ENCODE measurements at regions of chrX and their contacts with region 1.

Region 1: DNA sequence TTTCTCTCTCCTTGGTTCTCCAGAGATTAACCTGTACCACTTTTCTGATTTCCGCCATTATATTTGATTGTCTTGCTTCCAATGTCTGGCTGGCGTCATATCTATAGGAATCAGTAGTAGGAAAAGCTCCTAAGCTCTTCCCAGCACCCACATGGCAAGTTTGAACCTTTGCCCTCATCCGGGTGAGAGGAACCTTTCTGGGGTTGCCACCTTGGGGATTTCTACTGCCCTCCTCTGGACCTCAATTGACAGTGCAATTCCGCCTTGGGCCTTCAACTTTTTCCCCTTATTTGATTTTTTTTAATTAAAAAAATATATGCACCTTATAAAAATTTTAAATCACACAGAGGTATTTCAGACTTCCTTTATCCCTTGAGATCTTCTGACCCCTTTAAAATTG is 2.0 kb upstream of the CXorf66 start:
- DNase-seq: no peak
- H3K4me3 Mint-ChIP-seq: no peak overlapping the region
- H3K27ac Mint-ChIP-seq: no peak overlapping the region
- H3K4me1 Mint-ChIP-seq: no peaks in the 10 kb centered on the region
- H3K27me3 Mint-ChIP-seq: peaks cover 22% of the 10 kb centered on the region
- CTCF ChIP-seq: peak; percentile 14

Region 2: DNA sequence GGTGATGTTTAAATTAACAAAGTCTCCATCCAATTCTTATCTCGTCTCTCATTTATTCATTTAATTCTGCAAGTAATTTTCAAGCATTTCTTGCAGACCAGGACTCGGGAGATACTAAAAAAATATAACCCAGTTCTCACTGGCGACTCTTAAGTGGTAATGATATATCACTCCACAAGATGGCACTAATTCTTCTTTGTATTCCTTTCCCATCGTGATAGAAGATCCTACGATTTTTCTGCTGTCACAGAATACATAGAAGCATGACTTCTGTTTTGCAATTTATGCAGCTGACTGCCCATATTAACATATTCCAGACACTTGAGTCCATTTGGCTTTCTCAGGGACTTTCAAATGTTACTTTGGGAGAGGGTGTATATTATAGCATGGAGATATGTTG is 1191.8 kb before region 1 on chrX:
- CTCF ChIA-PET with region 1: no interaction called
- intact Hi-C with region 1: loop called (anchors 1 kb)
- DNase-seq: no peak
- H3K4me3 Mint-ChIP-seq: no peak overlapping the region
- H3K27ac Mint-ChIP-seq: no peak overlapping the region
- H3K4me1 Mint-ChIP-seq: no peaks in the 10 kb centered on the region
- H3K27me3 Mint-ChIP-seq: no peaks in the 10 kb centered on the region
- CTCF ChIP-seq: no peak

Region 3: GRCh38 chrX:139559383-139560042 is 407.8 kb before region 1 on chrX:
- CTCF ChIA-PET with region 1: no interaction called
- intact Hi-C with region 1: loop called (anchors 5 kb)
- DNase-seq: peak; percentile 11
- H3K4me3 Mint-ChIP-seq: no peak overlapping the region
- H3K27ac Mint-ChIP-seq: no peak overlapping the region
- H3K4me1 Mint-ChIP-seq: no peaks in the 10 kb centered on the region
- H3K27me3 Mint-ChIP-seq: no peaks in the 10 kb centered on the region
- CTCF ChIP-seq: no peak

Region 4: GRCh38 chrX:139680378-139680777 is 286.9 kb before region 1 on chrX:
- CTCF ChIA-PET with region 1: no interaction called
- intact Hi-C with region 1: no loop called
- DNase-seq: no peak
- H3K4me3 Mint-ChIP-seq: no peak overlapping the region
- H3K27ac Mint-ChIP-seq: no peak overlapping the region
- H3K4me1 Mint-ChIP-seq: no peaks in the 10 kb centered on the region
- H3K27me3 Mint-ChIP-seq: no peaks in the 10 kb centered on the region
- CTCF ChIP-seq: no peak

Region 5: DNA sequence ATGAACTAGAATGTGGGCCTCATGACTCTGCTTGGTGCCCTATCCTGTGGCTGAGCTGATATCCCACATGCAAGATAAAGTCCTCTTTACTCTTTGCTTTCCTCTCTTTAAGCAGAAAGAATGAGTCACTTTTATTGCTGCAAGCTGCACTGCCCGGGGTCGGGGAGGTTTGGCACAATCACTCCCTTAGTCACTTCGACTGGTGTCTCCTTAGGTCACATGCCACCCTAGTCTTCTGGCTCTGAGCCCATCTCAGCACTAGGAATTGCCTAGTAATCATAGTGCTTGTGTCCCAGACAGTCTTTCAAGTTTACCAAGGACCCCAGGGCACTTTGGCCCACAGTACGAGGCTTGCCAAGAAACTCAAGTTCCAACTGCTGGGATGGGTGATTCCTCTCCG is 73.1 kb after region 1 on chrX:
- CTCF ChIA-PET with region 1: no interaction called
- intact Hi-C with region 1: no loop called
- DNase-seq: peak; percentile 38
- H3K4me3 Mint-ChIP-seq: no peak overlapping the region
- H3K27ac Mint-ChIP-seq: no peak overlapping the region
- H3K4me1 Mint-ChIP-seq: no peaks in the 10 kb centered on the region
- H3K27me3 Mint-ChIP-seq: no peaks in the 10 kb centered on the region
- CTCF ChIP-seq: no peak

Measured in Calu3 (cell line).